ENCODE measurements at regions of chr7 and their contacts with region 1.

Region 1: DNA sequence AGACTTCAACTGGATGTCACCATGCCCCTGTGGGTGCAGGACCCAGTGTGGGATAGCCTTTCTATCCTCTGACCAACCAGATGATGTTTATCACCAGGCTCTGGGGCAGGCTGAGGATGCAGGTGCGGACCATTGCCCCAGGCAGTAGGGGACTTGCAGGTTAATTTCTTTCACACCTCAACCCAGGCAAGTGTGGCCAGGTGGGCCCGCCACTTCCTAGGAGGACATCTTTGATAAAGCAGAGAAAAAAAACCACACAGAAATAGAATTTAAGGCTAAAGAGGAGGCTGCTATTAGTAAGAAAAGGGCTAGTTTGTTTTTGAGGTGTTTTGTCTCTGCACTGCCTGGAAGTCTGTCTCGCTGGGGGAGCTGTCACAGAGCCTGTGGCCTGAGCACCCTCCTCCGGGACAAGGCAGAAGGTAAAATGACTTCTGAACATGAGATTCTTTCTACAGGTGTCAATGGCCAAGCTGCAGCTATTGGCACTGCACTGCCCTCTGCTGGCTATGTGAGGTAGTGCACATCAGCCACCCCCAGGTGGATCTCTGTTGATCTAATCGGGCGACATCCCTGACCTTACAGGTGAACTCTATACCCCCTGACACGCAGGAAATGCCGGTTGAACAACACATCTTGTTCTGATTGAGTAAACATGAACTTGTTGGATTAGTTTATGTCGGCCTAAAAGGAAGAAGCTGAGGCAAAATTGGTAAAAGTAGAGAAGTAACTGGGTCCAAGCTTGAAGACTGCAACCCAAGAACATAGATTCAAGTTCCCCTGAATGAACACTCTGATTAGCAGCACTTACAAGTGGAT is 21.0 kb downstream of the UPP1 start:
- DNase-seq: no peak
- H3K4me3 ChIP-seq: no peak overlapping the region
- CTCF ChIP-seq: peak; percentile 91

Region 2: GRCh38 chr7:47968847-47969774 is 140.9 kb before region 1 on chr7:
- CTCF ChIA-PET with region 1: interaction called, 15 read pairs
- POLR2A ChIA-PET with region 1: no interaction called
- DNase-seq: no peak
- H3K4me3 ChIP-seq: no peak overlapping the region
- CTCF ChIP-seq: peak; percentile 90

Region 3: DNA sequence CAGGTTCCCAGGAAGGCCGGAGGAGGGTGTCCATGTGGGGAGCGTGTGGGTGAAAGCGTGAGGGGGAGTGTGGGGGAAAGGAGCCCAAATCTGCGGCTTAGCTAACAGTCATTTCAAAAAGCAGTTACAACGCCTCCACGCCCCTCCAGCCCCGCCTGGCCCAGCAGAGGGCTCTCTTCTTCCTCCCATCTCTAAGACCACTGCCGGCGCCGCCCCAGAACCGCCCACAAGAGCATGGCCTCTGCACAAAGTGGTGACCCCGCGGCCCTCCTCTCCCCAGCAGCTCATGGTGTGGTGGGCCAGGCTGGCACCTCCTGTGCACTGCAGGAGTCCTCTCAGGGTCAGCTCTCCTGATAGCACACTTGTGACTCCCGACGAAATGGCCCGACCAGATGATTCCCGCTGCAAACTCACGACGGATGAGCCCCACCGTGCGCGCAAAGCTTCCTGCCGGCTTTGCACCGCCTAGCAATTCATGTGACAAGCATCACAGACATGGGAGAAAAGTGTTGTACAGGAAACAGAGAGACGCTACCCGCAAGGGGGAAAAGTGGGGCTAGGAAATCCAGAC is 118.2 kb before region 1 on chr7:
- CTCF ChIA-PET with region 1: interaction called, 320 read pairs
- POLR2A ChIA-PET with region 1: interaction called, 4 read pairs
- DNase-seq: no peak
- H3K4me3 ChIP-seq: peak overlapping the region; percentile 63
- CTCF ChIP-seq: peak; percentile 86

Region 4: GRCh38 chr7:48011323-48011722 is 98.7 kb before region 1 on chr7:
- CTCF ChIA-PET with region 1: interaction called, 14 read pairs
- POLR2A ChIA-PET with region 1: no interaction called
- DNase-seq: no peak
- H3K4me3 ChIP-seq: no peak overlapping the region
- CTCF ChIP-seq: no peak

Region 5: GRCh38 chr7:48094751-48095562 is 15.1 kb before region 1 on chr7:
- CTCF ChIA-PET with region 1: interaction called, 81 read pairs
- POLR2A ChIA-PET with region 1: no interaction called
- DNase-seq: peak; percentile 53
- H3K4me3 ChIP-seq: no peak overlapping the region
- CTCF ChIP-seq: no peak

Region 6: DNA sequence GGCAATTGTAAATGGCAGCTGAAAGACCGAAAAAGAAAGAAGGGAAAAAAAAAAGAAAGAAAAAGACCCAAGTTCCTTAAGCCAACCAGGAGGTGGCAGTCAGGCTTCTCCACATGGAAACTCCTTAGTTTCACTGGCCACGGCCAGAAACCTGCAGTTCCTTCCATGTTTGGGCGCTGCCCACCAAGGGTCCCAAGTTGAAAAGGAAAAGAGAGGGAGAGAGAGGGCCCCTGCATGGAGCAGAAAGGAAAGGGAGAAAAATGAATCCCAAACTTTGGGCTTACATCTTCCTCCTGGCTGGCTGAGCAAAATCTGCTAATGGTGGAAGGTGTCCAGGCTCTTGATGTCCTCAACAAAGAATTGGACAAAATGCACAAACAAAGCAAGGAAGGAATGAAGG is 29.4 kb after region 1 on chr7:
- CTCF ChIA-PET with region 1: interaction called, 15 read pairs
- POLR2A ChIA-PET with region 1: no interaction called
- DNase-seq: no peak
- H3K4me3 ChIP-seq: no peak overlapping the region
- CTCF ChIP-seq: peak; percentile 28

Measured in AG04449 (cell line).